H1 (cell line): ENCODE measurements at regions of chr12 and their contacts with region 1.

Region 1: GRCh38 chr12:21527451-21528180 is 1.5 kb downstream of the SPX start:
- DNase-seq: peak; percentile 54 to 78
- H3K4me3 ChIP-seq: peak overlapping the region; percentile 51 to 75 (median 62)
- H3K27ac ChIP-seq: no peak overlapping the region
- H3K4me1 ChIP-seq: peaks cover 0 to 4% (median 0%) of the 10 kb centered on the region in 4 experiments; a peak in 1 of 7 replicates
- H3K27me3 ChIP-seq: peaks cover 0 to 16% (median 9%) of the 10 kb centered on the region in 4 experiments; a peak in 5 of 7 replicates
- CTCF ChIP-seq: no peak
- EP300 ChIP-seq: no peak
- POLR2A ChIP-seq: peak in 1 of 2 experiments; percentile 65; a peak in 2 of 3 replicates
- RAD21 ChIP-seq: 0 out of 4 replicates have a peak, but pooled peaks of 1 of the 2 experiments have one; percentile 1

Region 2: GRCh38 chr12:21501379-21501956 is 26.1 kb before region 1 on chr12 and contains the starts of genes GOLT1B and RECQL:
- CTCF ChIA-PET with region 1: no interaction called
- POLR2A ChIA-PET with region 1: interaction called, 18 read pairs
- DNase-seq: peak; percentile 87 to 89
- H3K4me3 ChIP-seq: peak within 1 kb of the TSS; percentile 72 to 93 (median 84)
- H3K27ac ChIP-seq: peak within 1 kb of the TSS; percentile 83
- H3K4me1 ChIP-seq: peaks cover 0 to 6% (median 2%) of the 10 kb centered on the region in 4 experiments; a peak in 4 of 7 replicates
- H3K27me3 ChIP-seq: no peaks in the 10 kb centered on the region
- CTCF ChIP-seq: no peak
- EP300 ChIP-seq: no peak
- POLR2A ChIP-seq: peak; percentile 82 to 83
- RAD21 ChIP-seq: no peak
- total RNA-seq, gene GOLT1B: 37.4 and 38.3 TPM in 2 replicates
- total RNA-seq, gene RECQL: 37.7 and 40.3 TPM in 2 replicates

Region 3: GRCh38 chr12:21631367-21631766 is 103.8 kb after region 1 on chr12:
- CTCF ChIA-PET with region 1: no interaction called
- POLR2A ChIA-PET with region 1: interaction called, 11 read pairs
- DNase-seq: no peak
- H3K4me3 ChIP-seq: no peak overlapping the region
- H3K27ac ChIP-seq: no peak overlapping the region
- H3K4me1 ChIP-seq: no peaks in the 10 kb centered on the region
- H3K27me3 ChIP-seq: no peaks in the 10 kb centered on the region
- CTCF ChIP-seq: no peak
- EP300 ChIP-seq: no peak
- POLR2A ChIP-seq: no peak
- RAD21 ChIP-seq: no peak

Region 4: GRCh38 chr12:21650833-21651396 is 123.3 kb after region 1 on chr12:
- CTCF ChIA-PET with region 1: no interaction called
- POLR2A ChIA-PET with region 1: interaction called, 10 read pairs
- DNase-seq: no peak
- H3K4me3 ChIP-seq: no peak overlapping the region
- H3K27ac ChIP-seq: no peak overlapping the region
- H3K4me1 ChIP-seq: peaks cover 0 to 11% (median 5%) of the 10 kb centered on the region in 4 experiments; a peak in 5 of 7 replicates
- H3K27me3 ChIP-seq: no peaks in the 10 kb centered on the region
- CTCF ChIP-seq: no peak
- EP300 ChIP-seq: no peak
- POLR2A ChIP-seq: peak in 1 of 2 experiments; percentile 60; a peak in 2 of 3 replicates
- RAD21 ChIP-seq: no peak

Region 5: GRCh38 chr12:21831791-21832344 is 304.3 kb after region 1 on chr12:
- CTCF ChIA-PET with region 1: no interaction called
- POLR2A ChIA-PET with region 1: no interaction called
- DNase-seq: no peak
- H3K4me3 ChIP-seq: no peak overlapping the region
- H3K27ac ChIP-seq: no peak overlapping the region
- H3K4me1 ChIP-seq: no peaks in the 10 kb centered on the region
- H3K27me3 ChIP-seq: no peaks in the 10 kb centered on the region
- CTCF ChIP-seq: no peak
- EP300 ChIP-seq: no peak
- POLR2A ChIP-seq: no peak
- RAD21 ChIP-seq: no peak